ENCODE measurements at regions of chr3 and their contacts with region 1.

Region 1: GRCh38 chr3:187616307-187616972 is 53.8 kb downstream of the SST start:
- DNase-seq: peak; percentile 74
- ATAC-seq: peak; percentile 74
- H3K4me3 Mint-ChIP-seq: no peak overlapping the region
- H3K27ac Mint-ChIP-seq: no peak overlapping the region
- H3K4me1 Mint-ChIP-seq: peaks cover 7% of the 10 kb centered on the region
- H3K27me3 Mint-ChIP-seq: peaks cover 19% of the 10 kb centered on the region

Region 2: GRCh38 chr3:186217820-186218164 is 1398.6 kb before region 1 on chr3:
- CTCF ChIA-PET with region 1: no interaction called
- POLR2A ChIA-PET with region 1: no interaction called
- DNase-seq: no peak
- ATAC-seq: peak; percentile 80
- H3K4me3 Mint-ChIP-seq: no peak overlapping the region
- H3K27ac Mint-ChIP-seq: no peak overlapping the region
- H3K4me1 Mint-ChIP-seq: peaks cover 20% of the 10 kb centered on the region
- H3K27me3 Mint-ChIP-seq: peaks cover 29% of the 10 kb centered on the region

Region 3: DNA sequence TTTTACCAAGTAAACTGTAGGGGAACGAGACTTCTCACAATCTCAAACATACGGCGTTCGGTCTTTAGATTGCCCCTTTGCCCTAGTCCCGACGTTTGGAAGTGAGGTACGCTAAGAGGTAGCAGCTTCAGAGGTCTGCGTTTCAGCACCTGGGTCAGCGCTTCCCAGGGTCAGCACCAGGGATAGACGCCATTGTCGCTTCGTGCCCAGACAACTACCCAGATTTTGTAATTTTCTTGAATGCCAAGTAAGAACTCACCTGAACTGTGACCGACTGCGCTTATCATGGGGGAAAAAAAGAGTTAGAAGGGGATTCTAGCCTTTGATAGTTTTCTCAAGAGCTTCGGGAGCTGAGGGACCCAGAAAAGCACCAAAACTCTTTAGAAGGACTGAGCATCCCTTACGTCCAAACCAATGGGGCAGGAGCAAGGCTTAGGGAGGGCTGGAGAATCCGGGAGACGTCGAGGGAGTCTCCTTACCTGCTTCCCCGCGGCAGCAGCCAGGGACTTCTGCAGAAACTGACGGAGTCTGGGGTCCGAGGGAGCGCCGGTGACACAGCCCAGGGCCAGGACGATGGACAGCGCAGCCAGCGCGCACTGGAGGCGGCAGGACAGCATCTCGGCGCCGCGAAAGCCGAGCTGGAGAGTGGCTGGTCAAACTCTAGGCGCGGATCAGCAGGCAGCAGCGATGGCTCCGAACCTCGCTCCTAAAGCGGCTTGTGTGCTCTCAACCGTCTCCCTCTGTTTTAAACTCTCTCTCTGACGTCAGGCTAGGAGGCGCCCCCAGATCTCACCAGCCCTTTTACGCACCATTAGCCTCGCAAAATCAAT is 53.5 kb after region 1 on chr3 and contains the start of gene SST:
- CTCF ChIA-PET with region 1: interaction called, 10 read pairs
- POLR2A ChIA-PET with region 1: no interaction called
- DNase-seq: peak; percentile 46
- ATAC-seq: no peak
- H3K4me3 Mint-ChIP-seq: no peak within 1 kb of the TSS
- H3K27ac Mint-ChIP-seq: no peak within 1 kb of the TSS
- H3K4me1 Mint-ChIP-seq: no peaks in the 10 kb centered on the region
- H3K27me3 Mint-ChIP-seq: peaks cover 47% of the 10 kb centered on the region
- total RNA-seq, gene SST: not detected

Region 4: DNA sequence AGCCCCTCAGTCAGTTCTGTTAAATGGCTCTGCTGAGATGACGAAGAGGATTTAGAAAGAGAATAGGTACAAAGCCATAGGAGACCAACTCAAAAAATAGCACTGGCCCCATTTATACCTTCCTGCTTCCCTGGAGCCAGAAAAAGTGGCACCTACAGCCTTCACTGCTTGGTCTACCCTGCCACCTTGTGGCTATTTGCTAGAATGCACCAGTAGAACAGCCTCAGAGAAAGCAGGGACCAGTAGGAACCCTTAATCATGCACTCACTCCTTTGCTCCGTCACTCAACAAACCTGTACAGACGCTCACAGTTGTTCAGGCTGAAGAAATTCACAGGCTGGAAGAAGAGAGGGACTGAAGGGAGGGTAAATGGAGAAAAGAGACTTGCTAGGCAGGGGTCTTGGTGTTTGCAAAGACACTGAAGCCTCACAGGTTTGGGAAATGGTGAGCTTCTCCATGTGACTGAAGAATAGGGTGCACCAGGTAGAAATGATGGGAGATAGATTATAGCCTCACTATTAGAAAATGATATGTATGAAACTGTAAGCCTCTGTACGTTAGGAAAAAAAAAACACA is 98.1 kb after region 1 on chr3:
- CTCF ChIA-PET with region 1: interaction called, 29 read pairs
- POLR2A ChIA-PET with region 1: no interaction called
- DNase-seq: peak; percentile 82
- ATAC-seq: peak; percentile 80
- H3K4me3 Mint-ChIP-seq: no peak overlapping the region
- H3K27ac Mint-ChIP-seq: no peak overlapping the region
- H3K4me1 Mint-ChIP-seq: peaks cover 13% of the 10 kb centered on the region
- H3K27me3 Mint-ChIP-seq: peaks cover 4% of the 10 kb centered on the region